Prostate gland (tissue), 2 donors: ENCODE measurements at regions of chr1 and their contacts with region 1.

Region 1: GRCh38 chr1:225845571-225846259 is 35.8 kb downstream of the EPHX1 start:
- DNase-seq: peak; percentile 82
- H3K4me3 ChIP-seq: no peak overlapping the region
- H3K27ac ChIP-seq: peak overlapping the region in 1 of 2 donors; percentile 36
- H3K4me1 ChIP-seq: no peaks in the 10 kb centered on the region
- H3K27me3 ChIP-seq: no peaks in the 10 kb centered on the region
- CTCF ChIP-seq: peak; percentile 67 to 90 (median 83)
- POLR2A ChIP-seq: no peak

Region 2: DNA sequence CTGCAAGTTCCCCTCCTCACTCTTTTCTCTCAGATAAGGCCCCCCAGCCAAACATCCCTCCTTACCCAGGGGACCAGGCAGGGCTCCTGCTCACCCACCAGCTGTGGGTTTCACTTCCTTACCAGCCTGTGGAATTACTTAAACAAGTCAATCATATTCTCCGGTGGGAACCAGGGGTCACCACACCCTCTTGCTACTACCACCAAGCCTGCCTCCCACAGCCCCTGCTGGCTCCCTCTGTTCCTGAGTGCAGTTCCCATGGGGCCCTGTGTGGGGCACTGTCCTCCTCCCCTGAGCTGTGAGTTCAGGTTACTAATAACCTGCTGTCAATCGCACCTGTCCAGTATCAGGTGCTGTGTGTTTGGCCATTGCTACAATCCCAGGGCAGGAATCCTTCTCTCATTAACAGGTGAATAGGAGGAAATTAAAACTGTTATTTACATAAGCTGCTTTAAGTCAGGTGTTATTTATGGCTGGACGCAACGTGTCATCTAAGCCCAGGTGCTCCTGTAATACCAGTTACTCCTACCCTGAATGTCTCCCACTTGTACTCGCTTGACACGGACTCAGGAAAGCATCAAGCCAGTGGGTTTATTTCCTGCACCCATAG is 364.8 kb before region 1 on chr1:
- intact Hi-C with region 1: loop called (anchors 2 kb)
- DNase-seq: no peak
- H3K4me3 ChIP-seq: no peak overlapping the region
- H3K27ac ChIP-seq: no peak overlapping the region
- H3K4me1 ChIP-seq: no peaks in the 10 kb centered on the region
- H3K27me3 ChIP-seq: no peaks in the 10 kb centered on the region
- CTCF ChIP-seq: peak; percentile 63 to 86 (median 76)
- POLR2A ChIP-seq: no peak

Region 3: DNA sequence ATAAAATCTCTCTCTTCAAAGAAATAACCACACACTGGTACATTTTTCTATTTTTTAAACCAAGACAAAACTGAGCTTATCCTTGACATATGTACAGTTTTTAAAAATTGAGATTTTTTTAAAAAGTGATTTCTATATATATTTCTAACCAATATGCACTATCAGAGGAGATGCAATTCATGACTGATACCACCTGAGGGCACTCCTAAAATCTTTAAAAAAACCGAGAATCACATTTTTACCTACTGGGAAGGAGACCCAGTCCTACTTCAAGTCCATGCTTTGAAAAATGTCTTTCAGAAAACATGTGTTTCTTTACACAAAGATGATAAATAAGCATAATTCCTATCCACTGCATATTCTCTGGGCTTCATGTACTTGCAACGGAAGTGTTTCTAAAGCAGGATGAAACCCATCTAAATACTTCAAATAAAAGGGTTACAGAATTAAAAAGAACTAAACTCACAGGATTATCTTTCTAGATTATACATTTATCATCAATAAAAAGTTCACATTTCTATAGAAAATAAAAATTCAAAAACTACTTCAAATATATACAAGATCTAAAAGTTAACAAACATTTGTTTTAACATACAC is 291.4 kb before region 1 on chr1:
- intact Hi-C with region 1: loop called (anchors 10 kb)
- DNase-seq: no peak
- H3K4me3 ChIP-seq: no peak overlapping the region
- H3K27ac ChIP-seq: no peak overlapping the region
- H3K4me1 ChIP-seq: no peaks in the 10 kb centered on the region
- H3K27me3 ChIP-seq: no peaks in the 10 kb centered on the region
- CTCF ChIP-seq: peak in 3 of 4 experiments; percentile 29 to 60 (median 56)
- POLR2A ChIP-seq: no peak

Region 4: DNA sequence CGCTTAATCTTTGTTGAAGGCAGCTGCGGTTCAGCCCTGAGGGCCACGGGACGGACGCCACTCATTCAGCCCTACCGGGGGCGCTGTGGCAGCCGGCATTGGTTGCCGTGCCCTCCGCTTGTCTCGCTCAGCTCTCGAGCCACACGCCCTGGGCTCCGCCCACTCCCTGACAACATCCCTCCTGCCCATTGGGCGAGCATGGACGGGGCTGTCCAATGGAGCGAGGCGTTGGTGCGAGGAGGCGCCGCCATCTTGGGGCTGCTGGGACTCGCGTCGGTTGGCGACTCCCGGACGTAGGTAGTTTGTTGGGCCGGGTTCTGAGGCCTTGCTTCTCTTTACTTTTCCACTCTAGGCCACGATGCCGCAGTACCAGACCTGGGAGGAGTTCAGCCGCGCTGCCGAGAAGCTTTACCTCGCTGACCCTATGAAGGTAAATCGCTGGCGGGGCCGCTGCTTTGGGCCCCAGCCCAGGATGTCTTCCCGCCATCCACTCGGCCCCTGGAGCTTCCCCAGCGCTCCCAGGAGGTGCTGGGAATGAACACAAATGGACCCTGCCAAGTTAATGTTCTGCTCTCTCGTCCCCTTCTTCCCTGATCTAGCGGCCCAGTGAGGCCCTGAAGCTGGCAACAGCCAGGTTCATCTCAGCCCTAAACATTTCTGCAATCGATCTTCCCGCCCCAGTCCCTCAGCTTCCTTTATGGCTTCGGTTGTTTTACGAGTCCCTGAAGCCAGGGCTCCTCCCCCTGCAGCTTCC is 68.0 kb before region 1 on chr1 and contains the start of gene SRP9:
- intact Hi-C with region 1: loop called (anchors 2 kb)
- DNase-seq: peak; percentile 98
- H3K4me3 ChIP-seq: peak within 1 kb of the TSS; percentile 65 to 70
- H3K27ac ChIP-seq: peak within 1 kb of the TSS; percentile 92 to 96
- H3K4me1 ChIP-seq: peaks cover 10% of the 10 kb centered on the region
- H3K27me3 ChIP-seq: no peaks in the 10 kb centered on the region
- CTCF ChIP-seq: peak; percentile 81 to 96 (median 90)
- POLR2A ChIP-seq: peak; percentile 69
- total RNA-seq, gene SRP9: 168 to 324 TPM

Region 5: DNA sequence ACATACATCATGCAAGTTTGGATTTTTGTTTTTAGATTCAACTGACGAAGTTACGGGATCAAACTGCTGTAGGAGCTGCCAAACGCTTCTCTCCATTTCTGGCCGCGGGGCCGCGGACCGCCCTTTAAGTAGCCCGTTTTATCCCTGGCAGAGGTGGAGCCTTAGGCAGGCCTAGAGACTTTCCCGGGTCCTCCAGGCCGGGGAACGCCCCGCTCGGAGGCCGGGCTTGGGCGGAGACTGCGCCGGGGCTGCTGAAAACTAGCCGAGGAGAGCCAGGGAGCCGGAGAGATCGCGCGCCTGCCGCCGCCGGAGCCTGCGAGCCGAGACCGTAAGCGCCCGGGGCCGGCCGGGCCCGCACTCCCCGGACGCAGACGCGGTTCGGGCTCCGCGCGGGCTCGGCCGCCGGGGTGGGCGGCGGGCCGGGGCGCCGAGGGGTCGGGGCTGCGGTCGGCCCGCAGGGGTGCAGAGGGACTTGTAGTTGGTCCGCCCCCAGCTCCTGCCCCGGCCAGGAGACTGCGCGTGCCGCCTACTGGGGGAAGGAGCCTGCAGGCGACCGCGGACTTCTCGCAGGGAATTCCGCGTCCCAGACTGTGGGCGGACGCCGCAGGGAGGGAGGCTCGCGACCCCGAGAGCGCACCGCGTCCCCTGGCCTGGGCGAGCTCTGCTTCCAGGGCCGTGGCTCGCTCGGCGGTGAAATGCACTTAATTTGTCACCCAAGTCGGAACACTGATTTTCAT is 35.7 kb before region 1 on chr1 and contains the start of gene EPHX1:
- intact Hi-C with region 1: loop called (anchors 5 kb)
- DNase-seq: peak; percentile 91
- H3K4me3 ChIP-seq: peak within 1 kb of the TSS; percentile 69 to 72
- H3K27ac ChIP-seq: peak within 1 kb of the TSS; percentile 80 to 81
- H3K4me1 ChIP-seq: peaks cover 3% of the 10 kb centered on the region
- H3K27me3 ChIP-seq: no peaks in the 10 kb centered on the region
- CTCF ChIP-seq: peak in 2 of 4 experiments; percentile 32 to 33
- POLR2A ChIP-seq: peak; percentile 85
- total RNA-seq, gene EPHX1: 151 to 232 TPM

Region 6: DNA sequence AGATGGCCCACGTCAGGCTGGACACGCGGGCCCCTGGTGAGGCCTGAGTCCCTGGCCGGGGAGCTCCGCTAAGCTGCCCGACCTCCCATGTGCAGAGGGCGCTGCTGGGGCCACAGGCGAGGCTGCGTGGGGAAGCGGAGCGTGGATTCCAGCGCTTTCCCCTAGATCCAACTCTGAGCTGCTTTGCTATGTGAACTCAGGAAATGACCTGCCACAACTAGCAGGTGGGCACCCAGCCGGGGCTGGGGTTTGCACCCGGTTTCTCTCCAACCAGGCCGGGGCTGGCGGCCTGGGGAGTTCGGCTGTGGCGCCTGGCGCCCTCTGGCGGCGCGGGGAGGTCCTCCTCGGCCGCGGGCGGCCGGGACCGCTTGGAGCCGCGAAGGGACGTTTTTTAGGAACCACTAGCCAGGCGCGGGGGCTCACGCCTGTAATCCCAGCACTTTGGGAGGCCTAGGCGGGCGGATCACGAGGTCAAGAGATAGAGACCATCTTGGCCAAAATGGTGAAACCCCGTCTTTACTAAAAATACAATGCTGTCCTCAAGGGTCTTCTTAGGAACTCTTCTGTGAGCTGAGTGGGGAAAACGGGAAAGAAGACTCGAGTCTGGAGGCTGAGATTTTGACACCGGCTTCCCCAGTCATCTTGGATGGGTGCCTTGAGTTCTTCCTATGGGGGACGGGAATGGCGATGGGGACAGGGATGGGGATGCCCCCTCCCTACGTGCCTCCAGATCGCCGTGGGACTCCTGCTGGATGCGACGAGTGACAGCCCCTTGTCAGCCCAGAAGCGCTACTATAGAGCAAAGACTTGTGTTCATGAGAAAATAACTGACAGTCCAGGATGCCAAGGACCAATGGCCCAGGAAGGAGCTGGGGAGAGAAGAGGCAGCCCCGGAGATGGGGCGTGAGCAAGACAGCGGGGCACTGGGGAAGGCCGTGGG is 65.7 kb after region 1 on chr1:
- intact Hi-C with region 1: loop called (anchors 5 kb)
- DNase-seq: peak; percentile 35
- H3K4me3 ChIP-seq: no peak overlapping the region
- H3K27ac ChIP-seq: no peak overlapping the region
- H3K4me1 ChIP-seq: no peaks in the 10 kb centered on the region
- H3K27me3 ChIP-seq: no peaks in the 10 kb centered on the region
- CTCF ChIP-seq: peak; percentile 74 to 90 (median 89)
- POLR2A ChIP-seq: no peak